Naive thymus-derived CD4-positive, alpha-beta T cell (primary cell): ENCODE measurements at regions of chr16 and their contacts with region 1.

Region 1: GRCh38 chr16:2486645-2487516 is 12.0 kb downstream of the TBC1D24 start:
- DNase-seq: peak; percentile 54 to 86 (median 80)
- ATAC-seq: peak; percentile 96
- H3K4me3 ChIP-seq: no peak overlapping the region
- H3K4me3 Mint-ChIP-seq: peak overlapping the region; percentile 39 to 76 (median 56)
- H3K27ac ChIP-seq: peak overlapping the region; percentile 24
- H3K27ac Mint-ChIP-seq: peak overlapping the region; percentile 25 to 94 (median 75)
- H3K4me1 ChIP-seq: peaks cover 10 to 15% of the 10 kb centered on the region in 2 donors
- H3K4me1 Mint-ChIP-seq: peaks cover 11 to 23% (median 13%) of the 10 kb centered on the region in 7 donors
- H3K27me3 ChIP-seq: no peaks in the 10 kb centered on the region
- H3K27me3 Mint-ChIP-seq: no peaks in the 10 kb centered on the region

Region 2: GRCh38 chr16:1964506-1965395 is 522.1 kb before region 1 on chr16 and contains the start of gene RPS2:
- CTCF ChIA-PET with region 1: no interaction called
- POLR2A ChIA-PET with region 1: no interaction called
- intact Hi-C with region 1: no loop called
- DNase-seq: peak; percentile 94 to 99 (median 97)
- ATAC-seq: peak; percentile 97
- H3K4me3 ChIP-seq: peak within 1 kb of the TSS; percentile 81
- H3K4me3 Mint-ChIP-seq: peak within 1 kb of the TSS; percentile 89 to 97 (median 94)
- H3K27ac ChIP-seq: peak within 1 kb of the TSS; percentile 100
- H3K27ac Mint-ChIP-seq: peak within 1 kb of the TSS; percentile 95 to 98 (median 97)
- H3K4me1 ChIP-seq: peaks cover 25 to 41% of the 10 kb centered on the region in 2 donors
- H3K4me1 Mint-ChIP-seq: peaks cover 21 to 49% (median 32%) of the 10 kb centered on the region in 7 donors
- H3K27me3 ChIP-seq: no peaks in the 10 kb centered on the region
- H3K27me3 Mint-ChIP-seq: no peaks in the 10 kb centered on the region
- total RNA-seq, gene RPS2: 2,562 to 3,376 (median 2,918) TPM

Region 3: DNA sequence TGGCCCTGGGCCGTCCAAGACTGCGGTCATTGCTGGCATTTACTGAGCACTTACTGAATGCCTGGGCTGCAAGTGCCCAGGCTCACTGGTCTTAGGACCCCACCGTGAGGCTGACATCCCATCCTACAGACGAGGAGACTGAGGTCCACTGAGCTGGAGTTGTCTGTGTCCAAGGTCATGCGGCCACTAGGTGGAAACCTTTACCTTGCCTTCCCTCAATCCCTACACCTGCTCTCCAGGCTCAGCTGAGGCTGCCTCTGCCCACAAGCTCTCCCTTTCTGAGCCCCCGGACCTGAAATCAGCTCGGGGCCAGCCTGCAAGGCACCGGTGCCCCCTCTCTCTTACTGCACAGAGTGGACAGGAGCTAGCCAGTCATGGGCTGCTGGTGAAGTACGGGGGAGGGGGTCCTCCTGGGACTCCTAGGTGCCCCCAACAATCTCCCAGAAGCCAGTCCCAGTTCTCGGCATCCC is 292.0 kb before region 1 on chr16:
- CTCF ChIA-PET with region 1: interaction called, 4 read pairs
- POLR2A ChIA-PET with region 1: no interaction called
- intact Hi-C with region 1: loop called in 1 of 2 experiments (anchors 1 kb)
- DNase-seq: peak in 7 of 9 donors; percentile 41 to 63 (median 55)
- ATAC-seq: peak; percentile 73
- H3K4me3 ChIP-seq: no peak overlapping the region
- H3K4me3 Mint-ChIP-seq: peak overlapping the region in 8 of 10 donors; percentile 34 to 79 (median 50)
- H3K27ac ChIP-seq: no peak overlapping the region
- H3K27ac Mint-ChIP-seq: peak overlapping the region in 1 of 9 donors; percentile 28
- H3K4me1 ChIP-seq: peaks cover 0 to 8% of the 10 kb centered on the region in 2 donors
- H3K4me1 Mint-ChIP-seq: peaks cover 0 to 6% (median 4%) of the 10 kb centered on the region in 7 donors
- H3K27me3 ChIP-seq: peaks cover 6 to 11% of the 10 kb centered on the region in 2 donors
- H3K27me3 Mint-ChIP-seq: peaks cover 14 to 38% (median 16%) of the 10 kb centered on the region in 5 donors

Region 4: GRCh38 chr16:2251483-2252240 is 235.2 kb before region 1 on chr16 and contains the start of gene ECI1:
- CTCF ChIA-PET with region 1: interaction called, 3 read pairs
- POLR2A ChIA-PET with region 1: interaction called, 3 read pairs
- intact Hi-C with region 1: loop called in 1 of 2 experiments (anchors 1 kb)
- DNase-seq: peak; percentile 48 to 90 (median 62)
- ATAC-seq: peak; percentile 91
- H3K4me3 ChIP-seq: peak within 1 kb of the TSS; percentile 62
- H3K4me3 Mint-ChIP-seq: peak within 1 kb of the TSS; percentile 85 to 94 (median 89)
- H3K27ac ChIP-seq: peak within 1 kb of the TSS; percentile 76
- H3K27ac Mint-ChIP-seq: peak within 1 kb of the TSS; percentile 85 to 94 (median 91)
- H3K4me1 ChIP-seq: peaks cover 7% of the 10 kb centered on the region in 2 donors
- H3K4me1 Mint-ChIP-seq: peaks cover 0 to 12% (median 7%) of the 10 kb centered on the region in 7 donors
- H3K27me3 ChIP-seq: no peaks in the 10 kb centered on the region
- H3K27me3 Mint-ChIP-seq: no peaks in the 10 kb centered on the region
- total RNA-seq, gene ECI1: 19.9 to 29.3 (median 26.8) TPM

Region 5: GRCh38 chr16:2329551-2329950 is 157.3 kb before region 1 on chr16:
- CTCF ChIA-PET with region 1: no interaction called
- POLR2A ChIA-PET with region 1: no interaction called
- intact Hi-C with region 1: no loop called
- DNase-seq: no peak
- ATAC-seq: no peak
- H3K4me3 ChIP-seq: no peak overlapping the region
- H3K4me3 Mint-ChIP-seq: no peak overlapping the region
- H3K27ac ChIP-seq: no peak overlapping the region
- H3K27ac Mint-ChIP-seq: no peak overlapping the region
- H3K4me1 ChIP-seq: no peaks in the 10 kb centered on the region
- H3K4me1 Mint-ChIP-seq: no peaks in the 10 kb centered on the region
- H3K27me3 ChIP-seq: no peaks in the 10 kb centered on the region
- H3K27me3 Mint-ChIP-seq: peaks cover 0 to 10% (median 4%) of the 10 kb centered on the region in 5 donors

Region 6: DNA sequence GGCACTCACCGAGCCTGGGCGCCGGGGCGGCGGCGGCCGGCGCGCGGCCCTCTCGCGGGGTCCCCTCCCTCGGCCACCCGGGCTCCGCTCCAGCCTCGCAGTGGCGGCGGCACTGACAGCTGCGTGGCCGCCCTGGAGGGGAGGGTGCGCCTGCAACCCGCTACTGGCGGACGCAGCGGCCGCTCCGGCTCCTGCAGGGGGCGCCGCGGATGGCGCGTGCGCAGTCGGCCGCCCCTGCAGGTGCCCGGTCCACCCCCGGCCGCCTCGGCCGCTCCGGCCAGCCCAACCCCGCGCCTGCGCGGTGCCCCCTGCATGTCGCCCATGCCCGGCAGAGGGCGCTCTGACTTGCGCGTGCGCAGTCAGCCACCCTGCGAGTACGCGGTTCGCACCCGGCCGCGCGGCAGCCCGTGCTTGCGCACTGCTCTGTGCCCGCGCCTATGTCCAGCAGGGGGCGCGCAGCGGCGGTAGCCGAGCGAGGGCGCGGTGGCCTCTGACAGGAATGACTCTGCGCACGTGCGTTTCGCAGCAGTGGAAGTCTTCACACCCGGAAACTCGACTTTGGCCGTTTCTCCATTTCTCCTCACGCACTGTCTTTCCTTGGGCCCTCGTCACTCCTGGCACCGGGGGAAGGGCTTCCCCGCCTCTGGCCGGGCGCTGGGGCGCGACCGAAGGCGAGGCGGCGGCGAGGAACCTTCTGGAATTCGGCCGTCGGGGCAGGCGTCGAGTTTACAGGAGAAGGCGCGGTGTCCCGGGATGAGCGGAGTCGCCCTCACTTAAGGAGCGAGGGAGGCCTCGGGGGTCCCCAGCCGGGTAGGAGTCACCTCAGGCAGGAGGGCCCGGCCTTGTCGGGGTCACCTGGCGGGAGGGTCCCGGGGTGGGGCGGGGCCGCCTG is 146.1 kb before region 1 on chr16 and contains the start of gene ABCA3:
- CTCF ChIA-PET with region 1: interaction called, 4 read pairs
- POLR2A ChIA-PET with region 1: interaction called, 3 read pairs
- intact Hi-C with region 1: loop called (anchors 1 kb)
- DNase-seq: peak; percentile 85 to 100 (median 93)
- ATAC-seq: peak; percentile 96
- H3K4me3 ChIP-seq: peak within 1 kb of the TSS; percentile 62
- H3K4me3 Mint-ChIP-seq: peak within 1 kb of the TSS; percentile 78 to 91 (median 86)
- H3K27ac ChIP-seq: peak within 1 kb of the TSS; percentile 15
- H3K27ac Mint-ChIP-seq: peak within 1 kb of the TSS in 7 of 9 donors; percentile 31 to 82 (median 64)
- H3K4me1 ChIP-seq: peaks cover 6 to 9% of the 10 kb centered on the region in 2 donors
- H3K4me1 Mint-ChIP-seq: peaks cover 9 to 19% (median 16%) of the 10 kb centered on the region in 7 donors
- H3K27me3 ChIP-seq: no peaks in the 10 kb centered on the region
- H3K27me3 Mint-ChIP-seq: peaks cover 0 to 40% (median 0%) of the 10 kb centered on the region in 5 donors
- total RNA-seq, gene ABCA3: 7.0 to 10.0 (median 8.1) TPM

Region 7: GRCh38 chr16:2459647-2460390 is 27.1 kb before region 1 on chr16 and contains the start of gene TEDC2:
- CTCF ChIA-PET with region 1: no interaction called
- POLR2A ChIA-PET with region 1: no interaction called
- intact Hi-C with region 1: loop called in 1 of 2 experiments (anchors 1 kb)
- DNase-seq: peak; percentile 92 to 98 (median 94)
- ATAC-seq: peak; percentile 100
- H3K4me3 ChIP-seq: peak within 1 kb of the TSS; percentile 63
- H3K4me3 Mint-ChIP-seq: peak within 1 kb of the TSS; percentile 75 to 95 (median 88)
- H3K27ac ChIP-seq: peak within 1 kb of the TSS; percentile 57
- H3K27ac Mint-ChIP-seq: peak within 1 kb of the TSS in 7 of 9 donors; percentile 3 to 94 (median 69)
- H3K4me1 ChIP-seq: peaks cover 5 to 8% of the 10 kb centered on the region in 2 donors
- H3K4me1 Mint-ChIP-seq: peaks cover 4 to 14% (median 5%) of the 10 kb centered on the region in 7 donors
- H3K27me3 ChIP-seq: no peaks in the 10 kb centered on the region
- H3K27me3 Mint-ChIP-seq: no peaks in the 10 kb centered on the region
- total RNA-seq, gene TEDC2: 0.32 to 16.7 (median 0.71) TPM in 4 of 5 experiments, not detected in the other

Region 8: DNA sequence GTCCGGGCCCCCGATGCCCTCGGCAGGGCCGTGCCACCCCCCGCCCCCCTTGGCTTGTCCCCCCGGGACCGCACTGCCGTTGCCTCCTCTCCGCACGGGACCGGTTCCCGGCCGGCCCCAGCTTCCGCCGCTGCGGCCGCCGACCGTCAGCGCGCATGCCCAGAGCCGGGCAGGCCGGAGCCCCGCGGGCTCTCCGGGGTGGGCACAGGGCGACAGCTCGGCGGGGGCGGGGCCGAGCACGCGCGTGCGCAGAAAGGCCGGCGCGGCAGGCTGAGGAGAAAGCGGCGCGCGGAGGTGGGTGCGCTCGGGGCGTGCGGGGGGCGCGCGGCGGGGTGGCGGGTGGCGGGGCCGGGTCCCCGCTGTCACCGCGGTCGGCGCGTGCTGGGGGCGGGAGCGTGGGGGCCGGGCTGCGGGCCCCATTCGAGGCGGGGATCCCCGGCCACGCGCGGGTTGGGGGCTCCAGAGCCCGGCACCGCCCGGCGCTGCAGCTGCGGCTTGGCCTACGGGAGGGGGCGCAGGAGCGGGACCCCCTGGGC is 11.9 kb before region 1 on chr16 and contains the start of gene TBC1D24:
- CTCF ChIA-PET with region 1: interaction called, 3 read pairs
- POLR2A ChIA-PET with region 1: no interaction called
- intact Hi-C with region 1: loop called in 1 of 2 experiments (anchors 1 kb)
- DNase-seq: peak; percentile 41 to 94 (median 65)
- ATAC-seq: peak; percentile 80
- H3K4me3 ChIP-seq: peak within 1 kb of the TSS; percentile 71
- H3K4me3 Mint-ChIP-seq: peak within 1 kb of the TSS; percentile 61 to 81 (median 73)
- H3K27ac ChIP-seq: peak within 1 kb of the TSS; percentile 66
- H3K27ac Mint-ChIP-seq: no peak within 1 kb of the TSS
- H3K4me1 ChIP-seq: peaks cover 11 to 12% of the 10 kb centered on the region in 2 donors
- H3K4me1 Mint-ChIP-seq: peaks cover 14 to 34% (median 17%) of the 10 kb centered on the region in 7 donors
- H3K27me3 ChIP-seq: peaks cover 4 to 14% of the 10 kb centered on the region in 2 donors
- H3K27me3 Mint-ChIP-seq: peaks cover 7 to 31% (median 13%) of the 10 kb centered on the region in 5 donors
- total RNA-seq, gene TBC1D24: 5.4 to 13.5 (median 9.2) TPM

Region 9: GRCh38 chr16:2663553-2664546 is 177.0 kb after region 1 on chr16:
- CTCF ChIA-PET with region 1: no interaction called
- POLR2A ChIA-PET with region 1: no interaction called
- intact Hi-C with region 1: no loop called
- DNase-seq: no peak
- ATAC-seq: peak; percentile 92
- H3K4me3 ChIP-seq: no peak overlapping the region
- H3K4me3 Mint-ChIP-seq: peak overlapping the region in 1 of 10 donors; percentile 74
- H3K27ac ChIP-seq: no peak overlapping the region
- H3K27ac Mint-ChIP-seq: peak overlapping the region in 4 of 9 donors; percentile 21 to 94 (median 72)
- H3K4me1 ChIP-seq: peaks cover 0 to 14% of the 10 kb centered on the region in 2 donors
- H3K4me1 Mint-ChIP-seq: peaks cover 8 to 31% (median 20%) of the 10 kb centered on the region in 7 donors
- H3K27me3 ChIP-seq: no peaks in the 10 kb centered on the region
- H3K27me3 Mint-ChIP-seq: no peaks in the 10 kb centered on the region